ENCODE measurements at regions of chr15 and their contacts with region 1.

Region 1: GRCh38 chr15:65184868-65185738 is at the start of gene CLPX:
- DNase-seq: peak; percentile 91
- ATAC-seq: peak; percentile 94 to 97 (median 97)
- H3K4me3 ChIP-seq: peak within 1 kb of the TSS; percentile 78 to 99 (median 86)
- H3K27ac ChIP-seq: peak within 1 kb of the TSS; percentile 83 to 99 (median 95)
- H3K4me1 ChIP-seq: peaks cover 3 to 39% (median 31%) of the 10 kb centered on the region in 9 donors
- H3K27me3 ChIP-seq: no peaks in the 10 kb centered on the region
- CTCF ChIP-seq: no peak
- total RNA-seq, gene CLPX: 57.8 to 67.6 (median 60.8) TPM

Region 2: DNA sequence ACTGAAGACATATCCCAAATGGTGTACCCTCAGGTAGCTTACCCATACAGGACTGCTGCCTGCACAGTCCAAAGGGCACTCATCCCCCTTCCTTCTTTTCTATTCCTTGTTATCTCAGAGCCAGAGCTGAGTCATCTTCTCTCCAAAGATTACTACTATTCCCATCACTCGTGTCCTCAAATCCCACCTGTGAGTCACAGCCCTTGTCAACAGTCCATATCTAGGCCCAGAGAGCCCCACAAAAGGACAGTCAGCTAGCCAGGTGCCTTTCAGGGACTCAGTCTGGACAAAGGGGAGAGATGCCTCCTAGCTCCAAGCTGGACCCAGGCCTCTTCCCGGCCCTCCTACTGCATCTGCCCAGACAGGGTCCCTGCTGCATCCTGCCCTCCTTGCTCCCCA is 90.6 kb after region 1 on chr15:
- intact Hi-C with region 1: loop called in 9 of 10 experiments (anchors 1 to 10 kb)
- DNase-seq: no peak
- ATAC-seq: peak in 3 of 8 donors; percentile 38 to 66 (median 51)
- H3K4me3 ChIP-seq: no peak overlapping the region
- H3K27ac ChIP-seq: no peak overlapping the region
- H3K4me1 ChIP-seq: peaks cover 0 to 37% (median 12%) of the 10 kb centered on the region in 9 donors
- H3K27me3 ChIP-seq: no peaks in the 10 kb centered on the region
- CTCF ChIP-seq: no peak

Region 3: DNA sequence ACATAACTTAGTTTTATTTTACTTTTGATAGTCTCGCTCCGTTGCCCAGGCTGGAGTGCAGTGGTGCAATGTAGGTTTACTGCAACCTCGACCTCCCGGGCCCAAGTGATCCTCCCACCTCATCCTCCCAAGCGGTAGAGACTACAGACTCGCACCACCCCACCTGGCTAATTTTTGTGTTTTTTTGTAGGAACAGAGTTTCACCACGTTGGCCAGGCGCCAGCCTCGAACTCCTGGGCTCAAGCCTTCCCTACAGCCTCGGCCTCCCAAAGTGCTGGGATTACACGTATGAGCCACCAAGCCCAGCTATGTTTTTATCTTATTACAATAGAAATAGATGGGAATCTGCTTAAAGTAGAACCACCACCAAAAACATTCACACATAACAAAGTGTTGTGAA is 113.6 kb after region 1 on chr15:
- intact Hi-C with region 1: loop called in 6 of 10 experiments (anchors 1 to 5 kb)
- DNase-seq: no peak
- ATAC-seq: no peak
- H3K4me3 ChIP-seq: no peak overlapping the region
- H3K27ac ChIP-seq: no peak overlapping the region
- H3K4me1 ChIP-seq: peaks cover 0 to 36% (median 21%) of the 10 kb centered on the region in 9 donors
- H3K27me3 ChIP-seq: no peaks in the 10 kb centered on the region
- CTCF ChIP-seq: no peak

Region 4: DNA sequence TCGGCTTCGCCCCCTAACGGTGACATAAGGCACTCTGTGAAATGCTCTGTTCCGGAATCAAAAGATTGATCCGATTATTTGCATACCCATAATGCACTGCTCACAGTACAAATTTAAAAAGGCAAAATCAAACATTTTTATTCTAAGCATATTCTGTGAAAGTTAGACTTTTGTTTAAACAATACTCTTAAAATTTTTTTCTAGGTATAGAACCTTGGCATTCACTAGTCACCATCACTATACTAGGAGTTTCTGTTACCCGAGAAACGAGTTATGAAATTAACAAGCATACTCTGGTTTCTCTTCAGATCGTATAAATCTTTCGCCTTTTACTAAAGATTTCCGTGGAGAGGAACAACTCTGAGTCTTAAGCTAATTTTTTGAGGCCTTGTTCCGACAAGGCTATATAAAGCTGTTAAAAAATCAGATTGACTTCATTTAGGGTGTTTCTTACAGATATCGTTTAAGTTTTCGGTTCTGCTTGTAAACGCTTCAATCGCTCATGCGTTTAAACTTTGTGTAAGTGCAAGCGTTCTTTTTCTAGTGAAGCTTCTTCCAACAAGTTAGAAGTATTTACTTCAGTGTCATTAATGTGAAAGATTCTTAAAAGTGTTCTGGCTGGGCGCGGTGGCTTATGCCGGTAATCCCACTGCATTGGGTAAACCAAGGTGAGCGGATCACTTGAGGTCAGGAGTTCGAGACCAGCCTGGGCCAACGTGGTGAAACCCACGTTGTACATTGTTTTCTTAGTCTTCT is 119.5 kb after region 1 on chr15 and contains the start of gene RNU5B-1:
- intact Hi-C with region 1: loop called in 3 of 10 experiments (anchors 2 to 5 kb)
- DNase-seq: peak; percentile 56 to 86
- ATAC-seq: peak; percentile 83 to 95 (median 92)
- H3K4me3 ChIP-seq: peak within 1 kb of the TSS; percentile 12 to 63 (median 57)
- H3K27ac ChIP-seq: peak within 1 kb of the TSS; percentile 65 to 96 (median 91)
- H3K4me1 ChIP-seq: peaks cover 0 to 19% (median 11%) of the 10 kb centered on the region in 9 donors
- H3K27me3 ChIP-seq: no peaks in the 10 kb centered on the region
- CTCF ChIP-seq: peak in 7 of 9 donors; percentile 78 to 97 (median 89)
- total RNA-seq, gene RNU5B-1: 18.2 to 51.0 TPM in 2 of 10 donors, not detected in the others

Region 5: GRCh38 chr15:65384895-65385858 is 200.1 kb after region 1 on chr15:
- intact Hi-C with region 1: loop called in 1 of 10 experiments (anchors 5 kb)
- DNase-seq: peak; percentile 84 to 90
- ATAC-seq: peak; percentile 91 to 98 (median 96)
- H3K4me3 ChIP-seq: peak overlapping the region in 9 of 10 donors; percentile 18 to 48 (median 43)
- H3K27ac ChIP-seq: peak overlapping the region in 8 of 10 donors; percentile 15 to 34 (median 30)
- H3K4me1 ChIP-seq: peaks cover 7 to 25% (median 20%) of the 10 kb centered on the region in 9 donors
- H3K27me3 ChIP-seq: peaks cover 0 to 11% (median 4%) of the 10 kb centered on the region in 7 donors
- CTCF ChIP-seq: peak; percentile 80 to 91 (median 83)

Measured in heart right ventricle (tissue), 16 donors.